Heart right ventricle (tissue), 16 donors: ENCODE measurements at regions of chr3 and their contacts with region 1.

Region 1: GRCh38 chr3:184250167-184250828 is 826 bp downstream of the EEF1AKMT4 start:
- DNase-seq: peak; percentile 80 to 85
- ATAC-seq: peak; percentile 71 to 90 (median 85)
- H3K4me3 ChIP-seq: peak overlapping the region; percentile 63 to 92 (median 82)
- H3K27ac ChIP-seq: peak overlapping the region in 9 of 10 donors; percentile 77 to 94 (median 83)
- H3K4me1 ChIP-seq: peaks cover 0 to 23% (median 18%) of the 10 kb centered on the region in 9 donors
- H3K27me3 ChIP-seq: no peaks in the 10 kb centered on the region
- CTCF ChIP-seq: peak; percentile 86 to 97 (median 93)

Region 2: GRCh38 chr3:184017672-184018423 is 232.4 kb before region 1 on chr3 and contains the start of gene ABCC5:
- intact Hi-C with region 1: loop called in 2 of 10 experiments (anchors 5 to 10 kb)
- DNase-seq: peak; percentile 94
- ATAC-seq: peak; percentile 95 to 99 (median 98)
- H3K4me3 ChIP-seq: peak within 1 kb of the TSS; percentile 82 to 100 (median 94)
- H3K27ac ChIP-seq: peak within 1 kb of the TSS; percentile 57 to 91 (median 85)
- H3K4me1 ChIP-seq: peaks cover 0 to 42% (median 21%) of the 10 kb centered on the region in 9 donors
- H3K27me3 ChIP-seq: no peaks in the 10 kb centered on the region
- CTCF ChIP-seq: peak in 8 of 9 donors; percentile 2 to 60 (median 54)
- total RNA-seq, gene ABCC5: 26.0 to 89.6 (median 40.9) TPM

Region 3: GRCh38 chr3:184145111-184145524 is 105.2 kb before region 1 on chr3:
- intact Hi-C with region 1: loop called in 5 of 10 experiments (anchors 5 to 10 kb)
- DNase-seq: peak; percentile 36 to 49
- ATAC-seq: peak; percentile 45 to 78 (median 70)
- H3K4me3 ChIP-seq: no peak overlapping the region
- H3K27ac ChIP-seq: peak overlapping the region in 1 of 10 donors; percentile 25
- H3K4me1 ChIP-seq: peaks cover 0 to 10% (median 0%) of the 10 kb centered on the region in 9 donors
- H3K27me3 ChIP-seq: no peaks in the 10 kb centered on the region
- CTCF ChIP-seq: peak in 8 of 9 donors; percentile 18 to 56 (median 45)

Region 4: GRCh38 chr3:184154885-184155643 is 95.2 kb before region 1 on chr3 and contains the start of gene DVL3:
- intact Hi-C with region 1: loop called in 2 of 10 experiments (anchors 5 kb)
- DNase-seq: peak; percentile 74 to 82
- ATAC-seq: peak; percentile 59 to 93 (median 81)
- H3K4me3 ChIP-seq: peak within 1 kb of the TSS; percentile 87 to 99 (median 97)
- H3K27ac ChIP-seq: peak within 1 kb of the TSS; percentile 91 to 99 (median 96)
- H3K4me1 ChIP-seq: peaks cover 22 to 53% (median 42%) of the 10 kb centered on the region in 9 donors
- H3K27me3 ChIP-seq: no peaks in the 10 kb centered on the region
- CTCF ChIP-seq: no peak
- total RNA-seq, gene DVL3: 52.6 to 81.7 (median 68.6) TPM

Region 5: DNA sequence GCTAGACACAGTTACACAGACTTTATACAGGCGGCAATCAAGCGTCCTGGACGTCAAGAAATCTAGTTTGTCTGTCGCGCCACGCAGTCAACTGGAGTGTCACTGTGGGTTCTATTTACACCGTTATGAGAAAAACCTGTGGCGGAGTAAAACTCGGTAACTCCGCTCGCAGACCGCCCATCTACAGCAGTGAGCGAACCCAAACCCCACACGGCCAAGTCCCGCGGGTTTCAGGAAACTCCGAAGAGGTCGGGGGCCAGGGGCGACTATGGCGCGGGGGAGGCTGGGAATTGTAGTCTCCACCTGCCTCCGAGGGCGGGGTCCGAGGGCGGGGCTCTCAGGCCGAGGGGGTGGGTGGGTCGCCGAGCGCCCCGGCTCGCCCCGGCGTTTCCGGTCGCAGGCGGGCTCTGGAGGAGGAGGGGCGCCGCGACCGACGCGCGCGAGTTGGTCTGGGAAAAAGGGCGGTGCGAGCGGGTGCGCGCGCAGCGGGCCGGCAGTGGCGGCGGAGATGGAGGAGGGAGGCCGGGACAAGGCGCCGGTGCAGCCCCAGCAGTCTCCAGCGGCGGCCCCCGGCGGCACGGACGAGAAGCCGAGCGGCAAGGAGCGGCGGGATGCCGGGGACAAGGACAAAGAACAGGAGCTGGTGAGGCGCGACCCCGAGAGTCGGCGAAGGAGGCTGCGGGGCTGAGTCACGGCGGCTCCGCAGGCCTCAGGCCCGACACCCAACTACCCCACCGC is 48.6 kb after region 1 on chr3 and contains the start of gene PSMD2:
- intact Hi-C with region 1: loop called in 2 of 10 experiments (anchors 2 to 5 kb)
- DNase-seq: peak; percentile 98
- ATAC-seq: peak; percentile 99 to 100 (median 99)
- H3K4me3 ChIP-seq: peak within 1 kb of the TSS; percentile 67 to 100 (median 92)
- H3K27ac ChIP-seq: peak within 1 kb of the TSS; percentile 46 to 93 (median 83)
- H3K4me1 ChIP-seq: peaks cover 5 to 24% (median 16%) of the 10 kb centered on the region in 9 donors
- H3K27me3 ChIP-seq: no peaks in the 10 kb centered on the region
- CTCF ChIP-seq: no peak
- total RNA-seq, gene PSMD2: 210 to 254 (median 231) TPM